Psoas muscle (tissue), 8 donors: ENCODE measurements at regions of chr12 and their contacts with region 1.

Region 1: DNA sequence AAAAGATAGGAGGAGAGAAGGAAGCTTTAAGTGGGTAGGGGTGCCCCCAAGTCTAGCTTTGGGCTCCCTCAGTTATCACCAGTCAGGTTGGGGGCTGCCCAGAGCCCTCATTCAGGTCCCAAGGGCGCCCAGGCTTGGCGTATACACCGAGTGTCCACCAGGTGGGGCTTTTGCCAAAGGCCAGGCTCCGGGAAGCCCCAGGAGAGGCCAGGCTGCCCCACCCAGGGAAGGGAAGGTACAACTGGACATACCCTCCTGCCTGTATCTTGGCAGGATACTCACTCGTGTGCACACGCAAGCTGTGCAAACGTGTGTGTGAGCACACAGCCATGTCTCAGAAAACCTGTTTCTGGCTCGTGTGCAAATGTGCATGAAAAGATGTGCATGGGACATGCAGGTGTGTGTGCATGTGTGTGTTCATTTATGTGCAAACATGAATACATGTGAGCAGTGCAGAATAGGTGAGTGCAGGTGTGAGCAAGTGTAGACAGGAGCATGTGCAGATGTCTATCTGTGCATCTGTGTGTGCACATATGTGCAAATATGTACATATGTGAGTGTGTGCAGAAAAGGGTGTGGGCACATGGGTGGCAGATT is 103.9 kb upstream of the MYL2 start:
- DNase-seq: peak; percentile 42 to 67
- ATAC-seq: peak; percentile 71 to 86 (median 76)
- H3K4me3 ChIP-seq: no peak overlapping the region
- H3K27ac ChIP-seq: no peak overlapping the region
- H3K4me1 ChIP-seq: no peaks in the 10 kb centered on the region
- H3K27me3 ChIP-seq: peaks cover 4 to 46% (median 6%) of the 10 kb centered on the region in 3 donors
- CTCF ChIP-seq: peak; percentile 65

Region 2: GRCh38 chr12:110896559-110896958 is 127.7 kb before region 1 on chr12:
- intact Hi-C with region 1: no loop called
- DNase-seq: no peak
- ATAC-seq: no peak
- H3K4me3 ChIP-seq: no peak overlapping the region
- H3K27ac ChIP-seq: no peak overlapping the region
- H3K4me1 ChIP-seq: no peaks in the 10 kb centered on the region
- H3K27me3 ChIP-seq: no peaks in the 10 kb centered on the region
- CTCF ChIP-seq: no peak

Region 3: DNA sequence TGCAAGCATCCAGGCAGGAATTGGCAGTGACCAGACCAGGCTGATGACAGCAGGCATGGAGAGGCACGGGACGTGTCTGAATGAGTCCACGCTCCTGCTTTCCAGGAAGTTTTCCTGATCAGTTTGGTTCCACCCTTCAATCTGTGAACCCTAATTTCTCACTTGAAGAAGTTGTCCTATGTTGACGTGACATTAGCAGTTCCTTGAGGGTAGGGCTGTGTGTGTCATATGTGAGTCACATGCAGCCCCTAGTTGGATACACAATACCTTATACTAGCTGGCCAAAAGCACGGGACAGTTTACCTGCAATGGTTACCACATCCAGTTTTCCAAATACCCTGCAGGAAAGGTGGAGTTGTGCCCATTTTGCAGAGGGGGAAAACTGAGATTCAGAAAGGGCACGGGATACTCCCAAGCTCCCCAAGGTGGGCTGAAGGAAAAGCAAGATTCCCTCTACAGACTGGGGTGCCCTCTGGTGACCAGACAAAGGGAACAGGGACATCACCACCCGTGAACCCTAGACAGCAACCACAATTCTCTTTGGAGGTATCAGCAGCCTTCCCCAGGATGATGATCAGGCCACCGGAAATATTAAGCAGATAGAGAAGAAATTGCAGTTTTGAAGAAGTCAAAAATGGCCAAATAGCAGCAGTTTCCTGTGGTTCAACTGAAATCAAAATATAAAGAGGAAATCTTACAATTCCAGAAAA is 150.1 kb after region 1 on chr12:
- intact Hi-C with region 1: loop called in 1 of 2 experiments (anchors 5 kb)
- DNase-seq: no peak
- ATAC-seq: peak in 1 of 4 donors; percentile 60
- H3K4me3 ChIP-seq: no peak overlapping the region
- H3K27ac ChIP-seq: no peak overlapping the region
- H3K4me1 ChIP-seq: no peaks in the 10 kb centered on the region
- H3K27me3 ChIP-seq: peaks cover 0 to 30% (median 4%) of the 10 kb centered on the region in 3 donors
- CTCF ChIP-seq: peak; percentile 18

Region 4: DNA sequence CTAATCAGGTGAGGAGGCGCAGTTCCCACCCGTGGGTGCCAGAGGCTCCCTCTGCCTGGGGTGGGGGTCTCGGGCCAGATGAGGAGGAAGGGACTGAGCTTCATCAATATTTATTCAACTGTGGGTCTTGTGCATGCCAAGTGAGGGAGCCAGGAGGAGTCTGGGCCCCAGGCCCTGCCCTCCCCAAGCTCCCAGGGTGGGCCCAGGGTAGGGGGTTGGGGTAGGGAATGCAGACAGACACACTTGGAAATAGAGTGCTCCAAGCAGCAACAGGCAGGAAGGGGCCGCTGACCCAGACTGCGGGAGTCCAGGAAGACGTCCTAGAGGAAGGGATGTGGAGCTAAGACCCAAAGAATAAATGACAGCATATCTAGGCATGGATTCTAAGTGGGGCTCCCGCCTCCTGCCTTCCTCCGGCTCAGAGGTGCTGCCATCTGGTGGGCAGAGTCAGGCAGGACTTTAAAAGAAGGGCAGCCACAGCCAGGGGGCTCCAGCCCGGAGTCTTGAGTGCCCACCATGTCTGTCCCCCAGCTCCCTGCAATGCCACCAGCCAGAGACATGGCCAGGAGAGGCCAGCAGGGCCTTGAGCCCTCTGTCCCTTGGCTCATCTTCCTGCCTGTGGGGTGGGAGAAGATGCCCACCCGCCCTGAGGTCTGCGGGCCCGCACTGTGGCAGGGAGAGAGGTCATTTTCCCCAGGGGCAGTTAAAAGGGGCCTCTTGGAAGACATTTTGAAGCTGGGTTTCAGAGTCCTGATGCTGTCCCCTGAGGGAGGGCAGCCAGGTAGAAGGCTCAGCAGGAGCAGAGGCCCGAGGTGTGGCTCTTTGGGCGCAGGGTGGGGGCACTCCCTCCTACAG is 274.5 kb after region 1 on chr12:
- intact Hi-C with region 1: loop called in 1 of 2 experiments (anchors 2 kb)
- DNase-seq: peak; percentile 25 to 65
- ATAC-seq: peak; percentile 53 to 80 (median 72)
- H3K4me3 ChIP-seq: no peak overlapping the region
- H3K27ac ChIP-seq: no peak overlapping the region
- H3K4me1 ChIP-seq: no peaks in the 10 kb centered on the region
- H3K27me3 ChIP-seq: peaks cover 0 to under 1% (median 0%) of the 10 kb centered on the region in 3 donors
- CTCF ChIP-seq: peak; percentile 69